ENCODE measurements at regions of chr11 and their contacts with region 1.

Region 1: GRCh38 chr11:68751004-68751856 is at the start of gene TESMIN:
- DNase-seq: peak; percentile 91
- H3K4me3 ChIP-seq: peak within 1 kb of the TSS; percentile 71
- H3K27ac ChIP-seq: peak within 1 kb of the TSS; percentile 49
- H3K4me1 ChIP-seq: no peaks in the 10 kb centered on the region
- CTCF ChIP-seq: no peak
- total RNA-seq, gene TESMIN: 10.4 and 13.0 TPM in 2 replicates

Region 2: GRCh38 chr11:68370211-68371111 is 380.8 kb before region 1 on chr11:
- CTCF ChIA-PET with region 1: no interaction called
- POLR2A ChIA-PET with region 1: no interaction called
- intact Hi-C with region 1: no loop called
- DNase-seq: peak; percentile 93
- H3K4me3 ChIP-seq: peak overlapping the region; percentile 55
- H3K27ac ChIP-seq: peak overlapping the region; percentile 91
- H3K4me1 ChIP-seq: peaks cover 41% of the 10 kb centered on the region
- CTCF ChIP-seq: no peak; the same call in 1 of the 2 replicates

Region 3: GRCh38 chr11:68843703-68844312 is 92.6 kb after region 1 on chr11:
- CTCF ChIA-PET with region 1: interaction called, 4 read pairs
- POLR2A ChIA-PET with region 1: interaction called, 3 read pairs
- intact Hi-C with region 1: loop called (anchors 5 kb)
- DNase-seq: peak; percentile 70
- H3K4me3 ChIP-seq: no peak overlapping the region
- H3K27ac ChIP-seq: no peak overlapping the region
- H3K4me1 ChIP-seq: peaks cover 26% of the 10 kb centered on the region
- CTCF ChIP-seq: peak; percentile 72

Measured in OCI-LY7 (cell line).